ENCODE measurements at regions of chr2 and their contacts with region 1.

Region 1: GRCh38 chr2:193824474-193824873 is 1629.7 kb upstream of the TMEFF2 start:
- DNase-seq: no peak
- ATAC-seq: no peak
- H3K4me3 ChIP-seq: no peak overlapping the region
- H3K27ac ChIP-seq: no peak overlapping the region
- H3K4me1 ChIP-seq: no peaks in the 10 kb centered on the region
- H3K27me3 ChIP-seq: no peaks in the 10 kb centered on the region
- CTCF ChIP-seq: no peak
- POLR2A ChIP-seq: no peak

Region 2: DNA sequence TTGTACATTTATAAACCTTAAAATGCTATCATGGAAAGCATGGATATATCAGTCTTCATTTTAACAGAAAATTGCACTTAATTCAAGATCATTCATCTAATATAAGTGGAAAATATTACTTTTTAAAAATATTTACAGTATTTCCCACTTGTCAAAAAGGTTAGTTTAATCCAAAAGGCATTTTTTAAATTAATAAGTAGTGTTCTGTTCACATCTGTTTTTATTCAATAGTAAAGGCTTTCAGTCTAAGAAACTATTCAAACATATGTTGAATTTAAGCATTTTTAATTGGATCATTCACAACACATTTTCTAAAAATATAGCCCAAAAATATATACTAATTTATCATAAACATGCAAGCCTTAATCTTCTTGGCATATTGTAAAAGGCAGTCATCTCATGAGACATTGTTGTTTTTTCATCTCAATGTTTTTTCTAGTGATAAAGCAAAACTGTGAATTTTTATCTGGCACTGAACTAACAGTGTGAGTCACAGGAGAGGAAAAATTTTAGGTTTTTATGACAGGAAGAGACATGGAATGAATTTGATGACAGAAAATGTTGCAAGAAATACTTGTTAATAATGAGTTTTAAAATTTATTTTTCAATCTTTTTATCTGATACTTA is 12.8 kb after region 1 on chr2:
- intact Hi-C with region 1: loop called in 1 of 10 experiments (anchors 2 kb)
- DNase-seq: no peak
- ATAC-seq: no peak
- H3K4me3 ChIP-seq: no peak overlapping the region
- H3K27ac ChIP-seq: no peak overlapping the region
- H3K4me1 ChIP-seq: no peaks in the 10 kb centered on the region
- H3K27me3 ChIP-seq: no peaks in the 10 kb centered on the region
- CTCF ChIP-seq: no peak
- POLR2A ChIP-seq: no peak